Posterior cingulate gyrus (tissue), 11 donors: ENCODE measurements at regions of chr11 and their contacts with region 1.

Region 1: GRCh38 chr11:75867775-75868374 is 52.9 kb downstream of the UVRAG start:
- DNase-seq: peak in 1 of 10 donors; percentile 43

Region 2: GRCh38 chr11:75547580-75548058 is 320.3 kb before region 1 on chr11:
- intact Hi-C with region 1: loop called (anchors 5 kb)
- DNase-seq: peak in 7 of 10 donors; percentile 43 to 91 (median 68)

Region 3: DNA sequence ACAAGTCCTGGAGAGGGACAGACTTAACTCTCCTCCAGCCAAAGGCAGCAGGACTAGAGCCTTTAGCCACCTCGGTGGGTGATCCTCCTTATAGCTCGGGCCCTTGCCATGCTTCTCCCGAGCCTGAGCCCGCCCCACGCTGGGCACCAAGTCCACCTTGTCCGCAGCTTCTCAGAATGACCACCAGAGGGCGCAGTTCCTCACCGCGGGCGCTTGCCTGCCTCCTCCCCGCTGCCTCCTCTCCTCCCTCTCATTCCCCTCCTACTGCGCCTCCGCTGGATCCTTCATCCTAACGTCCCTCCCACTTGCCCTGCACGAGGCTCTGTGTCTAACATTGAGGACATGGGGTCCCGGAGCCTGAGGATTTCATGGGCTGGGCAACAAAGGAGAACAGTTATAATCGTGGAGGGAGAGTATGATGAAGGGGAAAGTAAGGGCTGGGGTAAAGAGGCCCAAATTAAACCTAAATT is 161.6 kb before region 1 on chr11:
- intact Hi-C with region 1: loop called (anchors 5 kb)
- DNase-seq: peak; percentile 28 to 95 (median 68)

Region 4: GRCh38 chr11:75721855-75722668 is 145.8 kb before region 1 on chr11:
- intact Hi-C with region 1: loop called (anchors 5 kb)
- DNase-seq: no peak

Region 5: DNA sequence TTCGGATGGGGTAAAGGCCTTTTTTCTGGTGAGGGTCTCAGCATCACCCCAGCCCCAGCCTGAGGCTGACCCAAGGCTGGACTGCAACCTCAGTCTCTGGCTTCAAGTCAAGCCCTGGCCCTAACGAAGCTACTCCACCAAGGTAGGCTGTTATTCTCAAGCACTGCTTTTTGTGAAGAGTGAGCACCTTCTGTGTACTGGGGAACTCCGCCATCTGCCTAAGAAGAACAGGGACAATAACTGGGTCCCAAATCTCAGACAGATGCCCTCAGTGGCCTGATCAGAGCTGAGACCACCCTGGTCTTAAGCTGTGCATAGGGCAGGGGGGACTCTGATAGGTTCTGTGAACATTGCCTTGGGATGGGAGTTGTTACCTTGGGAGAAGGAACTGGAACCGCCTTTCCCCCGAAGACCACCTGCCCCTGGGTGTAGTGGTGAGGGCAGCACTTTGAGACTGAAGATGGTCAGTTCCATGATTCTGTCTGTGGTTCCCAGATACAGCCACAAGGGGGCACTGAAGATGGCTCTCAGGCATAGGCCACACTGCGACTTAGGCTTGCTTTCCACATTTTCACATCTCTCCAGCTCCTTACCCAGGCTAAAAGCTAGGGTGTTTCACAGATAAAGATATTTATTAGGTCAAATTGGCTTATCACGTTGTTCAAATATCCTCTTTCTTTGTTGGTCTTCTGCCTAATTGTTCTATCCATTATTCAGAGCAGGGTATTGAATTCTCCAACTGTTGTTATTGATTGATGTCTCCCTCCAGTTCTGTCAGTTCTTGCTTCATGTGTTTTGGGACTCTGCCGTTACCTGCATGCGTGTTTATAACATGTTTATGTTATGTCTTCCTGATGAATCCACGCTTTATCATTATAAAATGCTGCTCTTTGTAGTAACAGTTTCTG is 64.7 kb before region 1 on chr11:
- intact Hi-C with region 1: loop called (anchors 1 kb)
- DNase-seq: peak in 9 of 10 donors; percentile 38 to 93 (median 83)

Region 6: DNA sequence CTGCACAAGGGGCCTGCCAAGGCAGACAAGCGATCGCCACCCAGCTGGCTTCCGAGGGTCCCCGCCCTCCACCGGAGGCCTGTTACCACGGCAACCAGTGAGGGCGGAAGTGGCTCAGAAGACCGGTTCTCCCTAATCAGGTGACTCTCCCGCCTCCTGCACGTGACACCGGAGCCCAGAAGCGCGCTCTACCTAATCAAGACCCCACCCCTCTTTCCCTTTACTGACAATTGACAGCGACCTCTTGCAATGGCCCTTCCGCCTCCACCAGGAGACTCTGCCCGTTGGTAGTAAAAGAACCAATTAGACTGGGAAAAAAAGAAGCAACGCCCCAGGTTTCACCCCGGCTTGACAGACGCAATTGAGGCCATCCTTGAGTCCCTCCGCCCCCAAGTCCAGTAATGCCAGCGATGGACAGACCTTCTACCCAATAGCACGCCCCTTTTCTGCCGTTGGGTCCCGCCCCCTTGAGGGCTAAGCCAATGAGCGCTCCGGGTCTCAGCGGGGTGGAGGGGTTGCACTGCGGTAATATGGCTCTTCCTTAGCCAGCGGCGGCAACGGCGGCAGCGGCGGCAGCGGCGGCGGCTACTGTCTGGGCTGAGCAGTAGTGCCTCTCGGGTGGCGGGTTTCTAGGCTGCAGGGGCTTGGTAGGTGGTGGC is 53.1 kb before region 1 on chr11 and contains the start of gene UVRAG:
- intact Hi-C with region 1: loop called (anchors 5 kb)
- DNase-seq: peak; percentile 98 to 100 (median 99)